Caco-2 (cell line): ENCODE measurements at regions of chr22 and their contacts with region 1.

Region 1: GRCh38 chr22:29553351-29554224 is at the start of gene THOC5:
- DNase-seq: peak; percentile 95 to 96
- H3K4me3 ChIP-seq: peak within 1 kb of the TSS; percentile 92
- H3K4me3 Mint-ChIP-seq: peak within 1 kb of the TSS; percentile 88
- H3K27ac Mint-ChIP-seq: peak within 1 kb of the TSS; percentile 88
- H3K4me1 ChIP-seq: 0 out of 2 replicates have a peak, but pooled peaks cover 6% of the 10 kb centered on the region
- H3K4me1 Mint-ChIP-seq: no peaks in the 10 kb centered on the region
- H3K27me3 ChIP-seq: no peaks in the 10 kb centered on the region
- H3K27me3 Mint-ChIP-seq: no peaks in the 10 kb centered on the region
- CTCF ChIP-seq: peak; percentile 56 to 74
- total RNA-seq, gene THOC5: 61.1 and 74.6 TPM in 2 replicates

Region 2: GRCh38 chr22:29569011-29569678 is 15.6 kb after region 1 on chr22:
- CTCF ChIA-PET with region 1: interaction called, 11 read pairs
- POLR2A ChIA-PET with region 1: interaction called, 5 read pairs
- intact Hi-C with region 1: no loop called
- DNase-seq: peak; percentile 53 to 72
- H3K4me3 ChIP-seq: no peak overlapping the region
- H3K4me3 Mint-ChIP-seq: peak overlapping the region; percentile 54
- H3K27ac Mint-ChIP-seq: peak overlapping the region; percentile 75
- H3K4me1 ChIP-seq: peaks cover 29% of the 10 kb centered on the region
- H3K4me1 Mint-ChIP-seq: peaks cover 13% of the 10 kb centered on the region
- H3K27me3 ChIP-seq: no peaks in the 10 kb centered on the region
- H3K27me3 Mint-ChIP-seq: no peaks in the 10 kb centered on the region
- CTCF ChIP-seq: no peak

Region 3: DNA sequence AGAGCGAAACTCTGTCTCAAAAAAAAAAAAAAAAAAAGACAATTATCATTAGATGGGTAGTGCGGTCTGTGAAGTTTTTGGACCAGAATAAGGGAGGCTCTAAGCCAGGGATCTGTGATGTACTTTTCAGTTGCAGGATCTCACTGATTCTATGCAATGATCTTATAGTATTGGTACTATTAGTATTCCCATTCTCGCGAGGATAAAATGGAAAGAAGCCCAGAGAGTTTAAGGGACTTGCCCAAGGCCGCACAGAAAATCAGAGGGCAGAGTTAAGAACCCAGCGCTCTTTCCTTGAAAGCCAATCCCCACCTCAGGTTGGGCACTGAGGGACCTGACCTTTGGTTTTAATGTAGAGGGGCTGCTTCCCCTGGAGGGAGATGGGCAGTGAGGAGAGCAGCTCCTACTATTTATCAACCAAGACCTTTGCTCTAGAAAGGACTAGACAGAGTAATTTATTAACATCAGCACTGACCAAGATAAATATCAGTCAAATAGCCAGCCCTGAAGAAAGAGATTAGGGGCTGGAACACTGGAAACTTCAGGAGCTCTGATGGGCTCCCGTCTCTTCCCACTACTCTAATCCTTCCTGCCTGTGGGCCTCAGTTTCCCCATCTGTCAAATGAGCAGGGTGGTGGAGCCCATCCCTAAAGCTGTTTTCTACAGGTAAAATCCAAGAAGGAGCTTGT is 21.3 kb after region 1 on chr22:
- CTCF ChIA-PET with region 1: interaction called, 15 read pairs
- POLR2A ChIA-PET with region 1: interaction called, 11 read pairs
- intact Hi-C with region 1: no loop called
- DNase-seq: peak; percentile 35 to 59
- H3K4me3 ChIP-seq: 0 out of 2 replicates have a peak overlapping the region, but pooled peaks have one; percentile 4
- H3K4me3 Mint-ChIP-seq: peak overlapping the region; percentile 51
- H3K27ac Mint-ChIP-seq: peak overlapping the region; percentile 31
- H3K4me1 ChIP-seq: peaks cover 47% of the 10 kb centered on the region
- H3K4me1 Mint-ChIP-seq: peaks cover 8% of the 10 kb centered on the region
- H3K27me3 ChIP-seq: no peaks in the 10 kb centered on the region
- H3K27me3 Mint-ChIP-seq: no peaks in the 10 kb centered on the region
- CTCF ChIP-seq: no peak

Region 4: DNA sequence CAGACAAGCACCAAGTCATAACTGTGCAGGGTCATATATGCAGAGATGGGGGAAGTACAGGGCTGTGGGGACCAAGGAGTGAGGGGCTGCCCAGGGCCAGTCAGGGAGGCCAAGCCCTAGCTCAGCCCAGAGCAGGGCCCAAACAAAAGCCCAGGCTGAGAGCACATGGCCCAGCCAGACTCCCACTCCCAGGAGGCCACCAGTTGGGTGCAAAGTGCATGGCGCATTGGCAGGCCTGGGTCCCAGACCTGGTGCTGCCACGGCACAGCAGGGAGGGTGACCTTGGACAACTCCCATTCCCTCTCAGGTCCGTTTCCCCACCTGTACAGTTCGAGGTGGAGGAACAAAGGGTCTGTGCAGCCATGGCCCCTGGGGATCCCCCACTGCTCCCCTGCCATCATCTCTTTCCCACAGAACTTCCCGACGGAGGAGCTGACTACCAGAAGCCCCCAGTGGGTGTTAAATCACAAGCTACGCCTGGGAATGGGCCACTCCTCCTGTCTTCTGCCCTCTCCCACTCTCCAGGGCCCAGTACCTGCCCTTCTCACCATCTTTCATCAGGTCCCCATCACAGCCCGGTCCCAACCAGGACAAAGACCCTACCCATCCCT is 26.7 kb after region 1 on chr22:
- CTCF ChIA-PET with region 1: interaction called, 15 read pairs
- POLR2A ChIA-PET with region 1: interaction called, 11 read pairs
- intact Hi-C with region 1: no loop called
- DNase-seq: peak; percentile 58 to 60
- H3K4me3 ChIP-seq: peak overlapping the region; percentile 50
- H3K4me3 Mint-ChIP-seq: peak overlapping the region; percentile 100
- H3K27ac Mint-ChIP-seq: peak overlapping the region; percentile 97
- H3K4me1 ChIP-seq: peaks cover 40% of the 10 kb centered on the region
- H3K4me1 Mint-ChIP-seq: peaks cover 17% of the 10 kb centered on the region
- H3K27me3 ChIP-seq: no peaks in the 10 kb centered on the region
- H3K27me3 Mint-ChIP-seq: no peaks in the 10 kb centered on the region
- CTCF ChIP-seq: no peak

Region 5: GRCh38 chr22:29603358-29604075 is 49.9 kb after region 1 on chr22 and contains the start of gene NF2:
- CTCF ChIA-PET with region 1: interaction called, 8 read pairs
- POLR2A ChIA-PET with region 1: no interaction called
- intact Hi-C with region 1: loop called (anchors 5 kb)
- DNase-seq: peak; percentile 99
- H3K4me3 ChIP-seq: peak within 1 kb of the TSS; percentile 90
- H3K4me3 Mint-ChIP-seq: peak within 1 kb of the TSS; percentile 88
- H3K27ac Mint-ChIP-seq: peak within 1 kb of the TSS; percentile 92
- H3K4me1 ChIP-seq: no peaks in the 10 kb centered on the region
- H3K4me1 Mint-ChIP-seq: no peaks in the 10 kb centered on the region
- H3K27me3 ChIP-seq: no peaks in the 10 kb centered on the region
- H3K27me3 Mint-ChIP-seq: no peaks in the 10 kb centered on the region
- CTCF ChIP-seq: no peak
- total RNA-seq, gene NF2: 53.2 and 56.5 TPM in 2 replicates